MCF 10A (cell line): ENCODE measurements at regions of chr12 and their contacts with region 1.

Region 1: GRCh38 chr12:118357257-118358007 is 15.3 kb downstream of the TAOK3 start:
- DNase-seq: peak; percentile 67
- H3K4me3 Mint-ChIP-seq: peak overlapping the region; percentile 36
- H3K27ac Mint-ChIP-seq: peak overlapping the region; percentile 69
- H3K4me1 Mint-ChIP-seq: peaks cover 13% of the 10 kb centered on the region
- H3K27me3 Mint-ChIP-seq: no peaks in the 10 kb centered on the region
- CTCF ChIP-seq: peak; percentile 7

Region 2: GRCh38 chr12:118307069-118307954 is 50.1 kb before region 1 on chr12:
- CTCF ChIA-PET with region 1: no interaction called
- POLR2A ChIA-PET with region 1: interaction called, 24 read pairs
- intact Hi-C with region 1: loop called (anchors 1 kb)
- DNase-seq: peak; percentile 90
- H3K4me3 Mint-ChIP-seq: peak overlapping the region; percentile 63
- H3K27ac Mint-ChIP-seq: peak overlapping the region; percentile 80
- H3K4me1 Mint-ChIP-seq: peaks cover 22% of the 10 kb centered on the region
- H3K27me3 Mint-ChIP-seq: no peaks in the 10 kb centered on the region
- CTCF ChIP-seq: no peak

Region 3: DNA sequence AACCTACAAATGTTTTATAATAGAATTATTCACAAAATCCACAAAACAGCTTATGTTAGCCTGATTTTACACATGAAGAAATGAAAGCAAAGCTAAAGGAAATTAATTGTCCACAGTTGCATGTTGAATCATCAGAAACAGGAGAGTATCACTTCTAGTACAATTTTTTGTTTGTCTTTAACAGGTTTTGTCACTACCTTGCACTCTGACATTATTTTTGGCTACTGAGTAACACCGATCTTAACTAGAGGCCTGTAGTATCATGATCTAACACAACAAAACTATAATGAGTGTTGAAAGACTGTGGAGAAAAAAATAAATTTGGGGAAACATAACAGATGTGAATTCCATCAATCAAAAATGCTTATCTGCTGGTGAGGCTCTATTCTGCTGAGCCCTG is 44.9 kb before region 1 on chr12:
- CTCF ChIA-PET with region 1: interaction called, 3 read pairs
- POLR2A ChIA-PET with region 1: interaction called, 24 read pairs
- intact Hi-C with region 1: loop called (anchors 1 kb)
- DNase-seq: no peak
- H3K4me3 Mint-ChIP-seq: no peak overlapping the region
- H3K27ac Mint-ChIP-seq: no peak overlapping the region
- H3K4me1 Mint-ChIP-seq: peaks cover 25% of the 10 kb centered on the region
- H3K27me3 Mint-ChIP-seq: no peaks in the 10 kb centered on the region
- CTCF ChIP-seq: no peak

Region 4: DNA sequence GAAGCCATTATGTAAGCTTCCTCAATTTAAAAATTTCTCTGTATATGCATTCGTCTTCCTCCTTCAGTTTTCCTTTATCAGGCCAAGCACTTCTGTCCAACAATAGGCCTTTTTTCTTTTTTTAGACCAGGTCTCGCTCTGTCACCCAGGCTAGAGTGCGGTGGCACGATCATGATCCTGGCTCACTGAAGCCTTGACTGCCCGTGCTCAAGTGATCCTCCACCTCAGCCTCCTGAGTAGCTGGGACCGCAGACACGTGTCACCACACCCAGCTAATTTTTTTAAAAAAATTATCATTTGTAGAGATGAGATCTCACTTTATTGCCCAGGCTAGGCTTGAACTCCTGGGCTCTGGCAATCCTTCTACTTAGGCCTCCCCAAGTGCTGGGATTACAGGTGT is 10.5 kb before region 1 on chr12:
- CTCF ChIA-PET with region 1: interaction called, 3 read pairs
- POLR2A ChIA-PET with region 1: interaction called, 11 read pairs
- intact Hi-C with region 1: no loop called
- DNase-seq: no peak
- H3K4me3 Mint-ChIP-seq: no peak overlapping the region
- H3K27ac Mint-ChIP-seq: no peak overlapping the region
- H3K4me1 Mint-ChIP-seq: no peaks in the 10 kb centered on the region
- H3K27me3 Mint-ChIP-seq: no peaks in the 10 kb centered on the region
- CTCF ChIP-seq: no peak

Region 5: GRCh38 chr12:118397708-118398440 is 40.4 kb after region 1 on chr12:
- CTCF ChIA-PET with region 1: no interaction called
- POLR2A ChIA-PET with region 1: no interaction called
- intact Hi-C with region 1: no loop called
- DNase-seq: no peak
- H3K4me3 Mint-ChIP-seq: no peak overlapping the region
- H3K27ac Mint-ChIP-seq: no peak overlapping the region
- H3K4me1 Mint-ChIP-seq: no peaks in the 10 kb centered on the region
- H3K27me3 Mint-ChIP-seq: no peaks in the 10 kb centered on the region
- CTCF ChIP-seq: no peak